Panc1 (cell line): ENCODE measurements at regions of chr18 and their contacts with region 1.

Region 1: DNA sequence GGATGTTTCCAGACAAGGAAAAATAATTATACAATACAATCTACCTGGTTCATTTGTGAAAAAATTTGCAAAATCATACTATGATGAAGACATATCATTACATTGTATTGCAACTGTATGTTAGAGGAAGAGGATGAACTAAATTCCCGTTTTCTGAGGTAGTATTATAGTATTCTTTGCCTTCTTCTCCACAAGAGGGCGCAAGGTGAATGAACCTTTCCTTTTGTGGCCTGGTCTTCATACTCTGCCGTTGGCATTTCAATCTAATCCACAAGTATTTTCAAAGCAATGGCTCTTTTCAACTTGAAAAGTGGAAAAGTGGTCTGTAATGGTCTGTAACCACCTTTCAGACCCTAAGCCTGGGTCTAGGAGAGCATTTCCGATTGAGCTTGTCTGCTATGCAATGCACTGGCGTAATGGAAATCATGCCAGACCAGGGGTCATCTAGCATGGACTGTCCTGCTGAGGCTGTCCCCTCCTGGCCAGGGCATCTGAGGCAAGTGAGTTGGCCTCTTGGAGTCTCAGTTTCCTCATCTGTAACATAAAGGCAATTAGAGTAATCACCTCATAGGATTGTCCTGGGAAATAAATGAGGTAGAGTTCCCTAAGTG is 30.8 kb upstream of the ZNF396 start:
- DNase-seq: peak; percentile 45
- ATAC-seq: peak; percentile 89
- H3K4me3 ChIP-seq: no peak overlapping the region
- H3K27ac ChIP-seq: peak overlapping the region; percentile 83
- H3K4me1 ChIP-seq: peaks cover 7% of the 10 kb centered on the region
- H3K27me3 ChIP-seq: no peaks in the 10 kb centered on the region
- CTCF ChIP-seq: peak; percentile 72

Region 2: GRCh38 chr18:34758378-34758948 is 649.5 kb before region 1 on chr18:
- CTCF ChIA-PET with region 1: no interaction called
- POLR2A ChIA-PET with region 1: no interaction called
- in situ Hi-C with region 1: no loop called
- intact Hi-C with region 1: no loop called
- DNase-seq: no peak
- ATAC-seq: no peak
- H3K4me3 ChIP-seq: no peak overlapping the region
- H3K27ac ChIP-seq: no peak overlapping the region
- H3K4me1 ChIP-seq: no peaks in the 10 kb centered on the region
- H3K27me3 ChIP-seq: no peaks in the 10 kb centered on the region
- CTCF ChIP-seq: no peak

Region 3: GRCh38 chr18:35478520-35479435 is 70.8 kb after region 1 on chr18:
- CTCF ChIA-PET with region 1: no interaction called
- POLR2A ChIA-PET with region 1: no interaction called
- in situ Hi-C with region 1: no loop called
- intact Hi-C with region 1: no loop called
- DNase-seq: peak; percentile 89
- ATAC-seq: peak; percentile 97
- H3K4me3 ChIP-seq: peak overlapping the region in 1 of 2 experiments; percentile 7; a peak in 1 of 4 replicates
- H3K27ac ChIP-seq: peak overlapping the region; percentile 81
- H3K4me1 ChIP-seq: peaks cover 36% of the 10 kb centered on the region
- H3K27me3 ChIP-seq: no peaks in the 10 kb centered on the region
- CTCF ChIP-seq: peak; percentile 20

Region 4: GRCh38 chr18:35497370-35498197 is 89.6 kb after region 1 on chr18 and contains the start of gene INO80C:
- CTCF ChIA-PET with region 1: no interaction called
- POLR2A ChIA-PET with region 1: no interaction called
- in situ Hi-C with region 1: no loop called
- intact Hi-C with region 1: loop called (anchors 10 kb)
- DNase-seq: peak; percentile 70
- ATAC-seq: peak; percentile 96
- H3K4me3 ChIP-seq: peak within 1 kb of the TSS; percentile 62 to 74
- H3K27ac ChIP-seq: peak within 1 kb of the TSS; percentile 96
- H3K4me1 ChIP-seq: peaks cover 34% of the 10 kb centered on the region
- H3K27me3 ChIP-seq: no peaks in the 10 kb centered on the region
- CTCF ChIP-seq: no peak
- total RNA-seq, gene INO80C: 25.8 TPM

Region 5: DNA sequence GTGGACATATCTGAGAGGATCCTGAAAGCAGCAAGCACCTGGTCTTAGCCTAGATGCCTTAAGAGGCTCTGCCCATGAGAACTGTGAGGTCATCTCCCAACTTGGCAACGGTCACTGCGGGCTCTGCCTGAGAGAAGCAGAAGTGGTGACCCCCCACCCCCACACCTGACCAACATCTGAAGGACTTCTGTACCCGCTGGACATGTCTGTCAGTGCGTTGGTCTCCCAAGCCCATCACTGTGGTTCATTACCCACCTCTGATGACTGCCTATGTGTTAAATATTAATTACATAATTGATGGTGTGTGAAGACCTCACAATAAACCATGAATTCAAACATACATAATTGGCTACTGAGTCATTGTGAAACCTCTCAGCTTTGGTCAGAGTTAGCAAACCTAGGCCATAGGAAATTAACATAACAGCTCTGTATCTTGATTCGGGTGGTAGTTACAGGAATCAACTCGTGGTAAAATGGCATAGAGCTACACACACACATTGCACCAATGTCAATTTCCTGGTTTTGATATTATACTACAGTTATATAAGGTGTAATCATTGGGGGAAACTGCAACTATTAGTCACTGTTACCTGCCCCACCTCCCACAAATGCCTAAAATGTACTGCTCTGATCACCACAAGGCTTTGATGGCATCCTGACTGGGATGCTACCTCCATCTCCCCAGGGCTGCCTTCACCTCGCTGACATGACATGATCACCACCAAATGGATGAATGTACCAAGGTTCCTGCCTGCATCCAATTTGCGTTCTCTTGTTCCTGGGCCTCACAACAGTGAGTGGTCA is 169.3 kb after region 1 on chr18:
- CTCF ChIA-PET with region 1: no interaction called
- POLR2A ChIA-PET with region 1: interaction called, 15 read pairs
- in situ Hi-C with region 1: no loop called
- intact Hi-C with region 1: no loop called
- DNase-seq: no peak
- ATAC-seq: no peak
- H3K4me3 ChIP-seq: no peak overlapping the region
- H3K27ac ChIP-seq: no peak overlapping the region
- H3K4me1 ChIP-seq: peaks cover 4% of the 10 kb centered on the region; the same call in 1 of the 2 replicates
- H3K27me3 ChIP-seq: no peaks in the 10 kb centered on the region
- CTCF ChIP-seq: no peak